OCI-LY7 (cell line): ENCODE measurements at regions of chr20 and their contacts with region 1.

Region 1: DNA sequence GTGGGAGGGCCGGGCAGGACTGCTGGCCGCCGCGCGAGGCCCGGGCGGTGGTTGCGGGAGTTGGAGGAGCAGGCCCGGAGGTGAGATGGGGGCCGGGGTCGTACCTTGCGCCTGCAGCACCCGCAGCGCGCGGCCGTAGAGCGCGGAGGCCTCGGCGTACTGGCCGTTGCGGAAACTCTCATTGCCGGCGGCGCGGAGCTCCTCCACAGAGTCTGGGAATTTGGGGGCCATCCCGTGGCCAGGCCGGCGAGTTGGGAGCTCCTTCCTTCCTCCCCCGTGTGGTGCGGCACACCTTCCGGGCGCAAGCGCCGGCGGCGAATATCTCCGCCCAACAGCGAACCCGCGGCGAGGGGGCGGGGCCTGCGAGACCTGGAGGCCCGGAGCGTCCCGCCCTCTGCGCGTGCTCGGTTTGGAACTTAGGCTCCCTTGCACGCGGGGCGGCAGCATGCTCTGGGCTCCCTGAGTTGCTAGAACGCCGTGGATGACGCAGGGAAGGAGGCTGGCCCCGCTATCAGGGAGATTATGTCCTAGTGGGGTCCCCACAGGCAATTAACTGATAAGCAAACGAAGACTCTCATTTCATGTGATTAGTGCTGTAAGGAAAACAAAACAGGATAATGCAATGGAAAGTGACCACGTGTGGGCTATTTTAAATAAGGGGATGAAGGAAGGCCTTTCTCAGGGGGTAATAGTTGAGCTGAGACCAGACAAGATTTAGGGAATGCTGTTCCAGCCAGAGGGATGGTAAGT is at the start of gene TOMM34:
- DNase-seq: peak; percentile 96
- H3K4me3 ChIP-seq: peak within 1 kb of the TSS; percentile 81
- H3K27ac ChIP-seq: peak within 1 kb of the TSS; percentile 34
- H3K4me1 ChIP-seq: peaks cover 68% of the 10 kb centered on the region
- CTCF ChIP-seq: peak; percentile 16; the same call in 1 of the 2 replicates
- total RNA-seq, gene TOMM34: 35.2 and 38.6 TPM in 2 replicates

Region 2: DNA sequence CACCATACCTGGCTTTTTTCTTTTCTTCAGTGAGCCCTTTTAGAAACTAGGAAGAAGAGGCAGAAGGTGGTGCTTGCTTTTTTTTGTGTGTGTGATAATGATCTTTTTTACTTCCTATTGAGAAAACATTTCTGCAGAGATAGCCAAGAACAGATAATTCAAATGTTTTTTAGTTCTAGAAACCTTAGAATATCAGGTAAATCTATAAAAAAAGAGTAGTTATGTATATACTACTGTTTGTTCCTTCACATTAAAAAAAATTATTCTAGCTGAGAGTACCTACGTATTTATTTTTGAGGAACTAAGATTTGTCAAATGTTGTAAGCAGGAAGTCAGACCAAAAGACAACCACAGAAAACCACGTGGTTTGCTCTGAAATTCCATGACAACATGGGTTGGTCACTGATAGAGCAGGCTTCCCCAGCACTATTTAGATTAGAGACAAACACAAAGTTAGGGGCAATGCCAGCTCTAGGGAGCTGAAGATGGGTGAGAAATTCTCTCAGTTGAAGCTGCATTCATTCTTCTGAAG is 18.9 kb after region 1 on chr20:
- CTCF ChIA-PET with region 1: interaction called, 4 read pairs
- POLR2A ChIA-PET with region 1: interaction called, 17 read pairs
- intact Hi-C with region 1: no loop called
- DNase-seq: peak; percentile 86
- H3K4me3 ChIP-seq: peak overlapping the region; percentile 51
- H3K27ac ChIP-seq: peak overlapping the region; percentile 92
- H3K4me1 ChIP-seq: peaks cover 31% of the 10 kb centered on the region
- CTCF ChIP-seq: no peak